Endothelial cell of umbilical vein (primary cell): ENCODE measurements at regions of chr10 and their contacts with region 1.

Region 1: GRCh38 chr10:31031558-31032257 is at the start of gene ZNF438:
- DNase-seq: peak; percentile 97
- H3K4me3 ChIP-seq: peak within 1 kb of the TSS in 2 of 3 experiments; percentile 50 to 66
- H3K27ac ChIP-seq: peak within 1 kb of the TSS; percentile 92
- H3K4me1 ChIP-seq: peaks cover 32% of the 10 kb centered on the region
- H3K27me3 ChIP-seq: no peaks in the 10 kb centered on the region
- CTCF ChIP-seq: peak; percentile 40 to 44
- POLR2A ChIP-seq: peak; percentile 82
- total RNA-seq, gene ZNF438: 11.2 and 15.1 TPM in 2 replicates

Region 2: DNA sequence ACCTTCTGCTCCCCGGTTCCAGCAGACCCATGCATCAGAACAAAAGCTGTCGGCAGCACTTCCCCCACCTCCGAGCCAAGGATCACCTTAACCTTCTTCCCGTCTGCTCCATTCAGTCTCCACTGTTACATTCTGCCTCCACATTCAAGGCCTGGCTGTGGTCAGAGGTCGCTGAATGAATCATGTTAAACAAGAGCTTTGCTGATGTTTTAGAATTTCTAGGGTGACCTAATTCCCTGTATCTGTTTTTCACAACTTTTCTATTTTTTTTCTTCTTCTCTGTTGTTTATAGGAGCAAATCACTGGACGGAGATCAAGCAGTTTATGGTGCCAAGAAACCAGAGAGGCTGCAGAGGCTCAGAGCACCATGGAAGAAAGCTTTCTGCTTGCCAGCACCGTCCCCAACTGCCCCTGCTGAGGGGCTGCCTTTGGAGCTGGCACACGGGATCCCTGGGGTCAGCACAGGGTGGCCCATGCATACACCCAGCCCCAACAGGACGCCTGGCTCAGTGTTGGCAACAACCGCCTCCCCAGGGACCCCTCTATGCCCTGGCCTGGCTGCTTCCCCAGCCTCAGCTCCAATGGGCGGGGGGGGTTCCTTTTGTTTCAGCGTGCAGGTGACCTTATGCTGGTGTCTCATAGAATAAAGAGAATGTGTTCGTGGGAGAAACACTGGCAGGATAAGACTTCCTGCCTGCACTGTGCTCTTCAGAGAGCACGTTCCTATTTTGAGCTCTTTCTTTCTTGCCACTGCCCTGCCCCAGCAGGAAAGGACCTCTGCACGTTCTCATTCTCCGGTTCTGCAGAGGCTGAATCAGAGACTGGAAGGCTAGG is 219.5 kb before region 1 on chr10:
- CTCF ChIA-PET with region 1: interaction called, 4 read pairs
- POLR2A ChIA-PET with region 1: interaction called, 5 read pairs
- dilution Hi-C with region 1: no loop called
- intact Hi-C with region 1: loop called (anchors 1 kb)
- DNase-seq: peak; percentile 96
- H3K4me3 ChIP-seq: no peak overlapping the region
- H3K27ac ChIP-seq: peak overlapping the region; percentile 96
- H3K4me1 ChIP-seq: peaks cover 54% of the 10 kb centered on the region
- H3K27me3 ChIP-seq: no peaks in the 10 kb centered on the region
- CTCF ChIP-seq: no peak
- POLR2A ChIP-seq: peak; percentile 29

Region 3: GRCh38 chr10:30928742-30929141 is 103.0 kb before region 1 on chr10:
- CTCF ChIA-PET with region 1: no interaction called
- POLR2A ChIA-PET with region 1: no interaction called
- dilution Hi-C with region 1: no loop called
- intact Hi-C with region 1: no loop called
- DNase-seq: no peak
- H3K4me3 ChIP-seq: no peak overlapping the region
- H3K27ac ChIP-seq: no peak overlapping the region
- H3K4me1 ChIP-seq: no peaks in the 10 kb centered on the region
- H3K27me3 ChIP-seq: no peaks in the 10 kb centered on the region
- CTCF ChIP-seq: no peak
- POLR2A ChIP-seq: no peak

Region 4: GRCh38 chr10:30986053-30986555 is 45.6 kb before region 1 on chr10:
- CTCF ChIA-PET with region 1: interaction called, 8 read pairs
- POLR2A ChIA-PET with region 1: interaction called, 3 read pairs
- dilution Hi-C with region 1: no loop called
- intact Hi-C with region 1: loop called (anchors 1 kb)
- DNase-seq: peak; percentile 69
- H3K4me3 ChIP-seq: no peak overlapping the region
- H3K27ac ChIP-seq: peak overlapping the region; percentile 93
- H3K4me1 ChIP-seq: peaks cover 56% of the 10 kb centered on the region
- H3K27me3 ChIP-seq: no peaks in the 10 kb centered on the region
- CTCF ChIP-seq: no peak
- POLR2A ChIP-seq: no peak

Region 5: DNA sequence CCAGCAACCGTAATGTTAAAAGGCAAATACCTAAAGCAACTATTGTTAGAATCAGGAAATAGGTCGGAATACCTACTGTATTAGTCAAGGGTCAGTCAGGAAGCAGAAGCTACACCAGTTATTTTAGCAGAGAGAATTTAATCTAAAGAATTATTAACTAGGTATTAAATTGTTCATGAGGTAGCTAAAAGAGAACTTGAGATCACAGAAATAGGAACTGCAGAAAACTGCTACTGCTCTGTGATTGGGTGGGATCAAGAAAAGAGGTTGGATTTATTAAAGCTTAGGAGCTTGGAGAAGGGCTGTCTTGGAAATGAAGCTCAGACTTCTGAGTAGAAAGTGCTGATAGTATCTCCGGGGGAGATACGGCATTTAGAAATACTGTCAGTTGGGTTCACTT is 20.0 kb after region 1 on chr10:
- CTCF ChIA-PET with region 1: interaction called, 6 read pairs
- POLR2A ChIA-PET with region 1: interaction called, 10 read pairs
- dilution Hi-C with region 1: no loop called
- intact Hi-C with region 1: loop called (anchors 1 kb)
- DNase-seq: peak; percentile 69
- H3K4me3 ChIP-seq: peak overlapping the region in 1 of 3 experiments; percentile 53
- H3K27ac ChIP-seq: peak overlapping the region; percentile 99
- H3K4me1 ChIP-seq: peaks cover 32% of the 10 kb centered on the region
- H3K27me3 ChIP-seq: no peaks in the 10 kb centered on the region
- CTCF ChIP-seq: no peak
- POLR2A ChIP-seq: no peak

Region 6: GRCh38 chr10:31426401-31426800 is 394.7 kb after region 1 on chr10:
- CTCF ChIA-PET with region 1: no interaction called
- POLR2A ChIA-PET with region 1: no interaction called
- dilution Hi-C with region 1: no loop called
- intact Hi-C with region 1: loop called (anchors 5 kb)
- DNase-seq: peak; percentile 97
- H3K4me3 ChIP-seq: peak overlapping the region in 1 of 3 experiments; percentile 46
- H3K27ac ChIP-seq: peak overlapping the region; percentile 56
- H3K4me1 ChIP-seq: peaks cover 44% of the 10 kb centered on the region
- H3K27me3 ChIP-seq: no peaks in the 10 kb centered on the region
- CTCF ChIP-seq: no peak
- POLR2A ChIP-seq: peak; percentile 29

Region 7: GRCh38 chr10:31808258-31809218 is 776.8 kb after region 1 on chr10:
- CTCF ChIA-PET with region 1: no interaction called
- POLR2A ChIA-PET with region 1: no interaction called
- dilution Hi-C with region 1: no loop called
- intact Hi-C with region 1: loop called (anchors 10 kb)
- DNase-seq: peak; percentile 81
- H3K4me3 ChIP-seq: no peak overlapping the region
- H3K27ac ChIP-seq: peak overlapping the region; percentile 69
- H3K4me1 ChIP-seq: peaks cover 4% of the 10 kb centered on the region
- H3K27me3 ChIP-seq: no peaks in the 10 kb centered on the region
- CTCF ChIP-seq: peak; percentile 10 to 27
- POLR2A ChIP-seq: no peak